B cell (primary cell): ENCODE measurements at regions of chr14 and their contacts with region 1.

Region 1: DNA sequence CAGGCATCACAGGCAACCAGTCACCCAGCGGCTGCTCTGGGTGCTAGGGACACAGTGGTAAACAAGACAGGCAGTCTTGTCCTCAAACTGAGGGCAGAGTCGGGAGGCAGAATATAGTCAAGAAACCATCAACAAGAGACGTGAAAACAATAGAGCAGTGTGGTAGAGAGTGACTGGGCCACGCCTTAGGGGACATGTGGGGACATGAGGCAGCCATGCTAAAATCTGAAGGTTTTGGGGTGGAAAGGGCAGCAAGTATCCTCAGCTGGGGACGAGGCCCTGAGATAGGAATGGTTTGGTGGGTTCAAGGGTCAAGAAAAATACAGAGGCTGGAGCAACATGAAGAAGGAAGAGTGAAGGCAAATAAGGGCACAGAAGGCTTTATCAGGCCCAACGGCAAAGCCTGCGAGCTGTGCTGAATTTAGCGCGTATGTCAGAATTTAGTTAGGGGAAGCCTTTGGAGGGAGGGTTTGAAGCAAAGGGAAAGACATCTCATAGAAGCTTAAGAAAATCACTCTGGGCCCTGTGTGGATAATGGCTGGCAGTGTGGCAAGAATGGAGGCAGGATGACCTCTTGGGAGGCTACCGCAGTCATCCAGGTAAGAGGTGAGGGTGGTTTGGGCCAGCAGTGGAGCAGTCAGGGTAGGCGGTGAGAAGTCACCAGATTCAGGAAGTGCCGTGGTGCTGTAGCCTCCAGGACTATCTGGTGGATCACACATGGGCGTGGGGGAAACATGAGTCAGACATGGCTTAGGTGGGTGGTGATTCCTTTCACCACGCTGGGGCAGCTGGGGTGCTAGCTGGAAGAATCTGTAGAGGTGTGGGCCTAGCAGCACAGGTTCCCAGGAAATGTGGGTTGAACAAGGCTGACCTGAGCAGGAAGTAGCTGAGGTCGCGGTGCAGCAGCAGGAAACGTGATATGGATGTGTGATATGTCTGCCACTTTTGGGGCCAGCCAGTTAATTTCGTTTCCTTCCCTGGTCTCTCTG is 3.0 kb downstream of the EVL start:
- DNase-seq: peak; percentile 80
- ATAC-seq: peak; percentile 41
- H3K4me3 ChIP-seq: peak overlapping the region; percentile 61 to 92 (median 69)
- H3K4me3 Mint-ChIP-seq: peak overlapping the region; percentile 100
- H3K27ac ChIP-seq: peak overlapping the region; percentile 79 to 87
- H3K27ac Mint-ChIP-seq: peak overlapping the region; percentile 98
- H3K4me1 ChIP-seq: peaks cover 77 to 86% of the 10 kb centered on the region in 2 donors
- H3K4me1 Mint-ChIP-seq: peaks cover 93% of the 10 kb centered on the region
- H3K27me3 ChIP-seq: no peaks in the 10 kb centered on the region
- H3K27me3 Mint-ChIP-seq: no peaks in the 10 kb centered on the region
- CTCF ChIP-seq: no peak

Region 2: GRCh38 chr14:99333841-99334635 is 734.2 kb before region 1 on chr14:
- CTCF ChIA-PET with region 1: no interaction called
- POLR2A ChIA-PET with region 1: no interaction called
- intact Hi-C with region 1: no loop called
- DNase-seq: no peak
- ATAC-seq: no peak
- H3K4me3 ChIP-seq: no peak overlapping the region
- H3K4me3 Mint-ChIP-seq: no peak overlapping the region
- H3K27ac ChIP-seq: no peak overlapping the region
- H3K27ac Mint-ChIP-seq: no peak overlapping the region
- H3K4me1 ChIP-seq: no peaks in the 10 kb centered on the region
- H3K4me1 Mint-ChIP-seq: no peaks in the 10 kb centered on the region
- H3K27me3 ChIP-seq: no peaks in the 10 kb centered on the region
- H3K27me3 Mint-ChIP-seq: peaks cover 6% of the 10 kb centered on the region
- CTCF ChIP-seq: no peak

Region 3: GRCh38 chr14:99982537-99983250 is 85.6 kb before region 1 on chr14:
- CTCF ChIA-PET with region 1: interaction called, 29 read pairs
- POLR2A ChIA-PET with region 1: no interaction called
- intact Hi-C with region 1: loop called (anchors 2 kb)
- DNase-seq: peak; percentile 74
- ATAC-seq: peak; percentile 99
- H3K4me3 ChIP-seq: no peak overlapping the region
- H3K4me3 Mint-ChIP-seq: no peak overlapping the region
- H3K27ac ChIP-seq: no peak overlapping the region
- H3K27ac Mint-ChIP-seq: no peak overlapping the region
- H3K4me1 ChIP-seq: no peaks in the 10 kb centered on the region
- H3K4me1 Mint-ChIP-seq: no peaks in the 10 kb centered on the region
- H3K27me3 ChIP-seq: no peaks in the 10 kb centered on the region
- H3K27me3 Mint-ChIP-seq: no peaks in the 10 kb centered on the region
- CTCF ChIP-seq: peak; percentile 96

Region 4: DNA sequence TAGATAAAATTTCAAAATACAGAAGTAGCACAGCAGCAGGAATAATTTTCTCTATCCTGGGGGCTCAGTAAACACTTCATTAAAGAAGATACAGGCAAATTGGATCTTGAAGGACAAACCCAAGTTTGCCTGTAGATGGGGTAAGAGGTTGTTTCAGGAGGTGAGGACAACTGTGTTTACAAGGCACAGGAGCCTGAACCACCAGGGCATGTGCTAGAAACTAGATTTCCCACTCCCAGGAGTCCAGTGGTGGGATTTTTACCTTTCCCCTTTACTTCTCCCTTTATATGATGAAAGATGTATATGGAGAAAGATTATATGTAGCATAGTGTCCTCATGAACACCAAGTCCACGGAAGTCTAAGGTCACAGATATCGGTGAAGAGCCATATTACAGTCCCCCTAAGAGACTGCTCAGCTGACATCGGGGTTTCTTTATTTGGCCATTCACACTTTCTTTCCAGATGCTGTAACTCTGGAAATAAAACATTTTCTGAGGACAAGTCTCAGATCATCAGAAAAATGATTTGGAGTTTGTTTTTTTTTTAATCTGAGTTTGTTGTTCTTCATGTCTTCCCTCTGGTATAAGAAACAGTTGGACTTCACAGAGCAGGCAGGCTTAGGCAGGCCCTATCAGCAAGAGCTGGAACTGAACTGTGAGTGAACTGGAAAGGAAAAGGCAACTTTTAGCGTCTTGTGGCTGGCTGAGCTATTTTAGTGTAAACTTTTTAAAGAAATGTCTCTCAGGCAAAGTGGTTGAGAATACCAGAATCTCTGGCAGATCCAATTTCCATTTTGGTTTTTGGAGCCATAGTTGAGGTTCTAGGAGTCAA is 11.1 kb before region 1 on chr14:
- CTCF ChIA-PET with region 1: interaction called, 86 read pairs
- POLR2A ChIA-PET with region 1: no interaction called
- intact Hi-C with region 1: loop called (anchors 1 kb)
- DNase-seq: peak; percentile 66
- ATAC-seq: peak; percentile 77
- H3K4me3 ChIP-seq: no peak overlapping the region
- H3K4me3 Mint-ChIP-seq: no peak overlapping the region
- H3K27ac ChIP-seq: no peak overlapping the region
- H3K27ac Mint-ChIP-seq: peak overlapping the region; percentile 57
- H3K4me1 ChIP-seq: peaks cover 16% of the 10 kb centered on the region in 2 donors
- H3K4me1 Mint-ChIP-seq: peaks cover 31% of the 10 kb centered on the region
- H3K27me3 ChIP-seq: no peaks in the 10 kb centered on the region
- H3K27me3 Mint-ChIP-seq: no peaks in the 10 kb centered on the region
- CTCF ChIP-seq: peak; percentile 69

Region 5: DNA sequence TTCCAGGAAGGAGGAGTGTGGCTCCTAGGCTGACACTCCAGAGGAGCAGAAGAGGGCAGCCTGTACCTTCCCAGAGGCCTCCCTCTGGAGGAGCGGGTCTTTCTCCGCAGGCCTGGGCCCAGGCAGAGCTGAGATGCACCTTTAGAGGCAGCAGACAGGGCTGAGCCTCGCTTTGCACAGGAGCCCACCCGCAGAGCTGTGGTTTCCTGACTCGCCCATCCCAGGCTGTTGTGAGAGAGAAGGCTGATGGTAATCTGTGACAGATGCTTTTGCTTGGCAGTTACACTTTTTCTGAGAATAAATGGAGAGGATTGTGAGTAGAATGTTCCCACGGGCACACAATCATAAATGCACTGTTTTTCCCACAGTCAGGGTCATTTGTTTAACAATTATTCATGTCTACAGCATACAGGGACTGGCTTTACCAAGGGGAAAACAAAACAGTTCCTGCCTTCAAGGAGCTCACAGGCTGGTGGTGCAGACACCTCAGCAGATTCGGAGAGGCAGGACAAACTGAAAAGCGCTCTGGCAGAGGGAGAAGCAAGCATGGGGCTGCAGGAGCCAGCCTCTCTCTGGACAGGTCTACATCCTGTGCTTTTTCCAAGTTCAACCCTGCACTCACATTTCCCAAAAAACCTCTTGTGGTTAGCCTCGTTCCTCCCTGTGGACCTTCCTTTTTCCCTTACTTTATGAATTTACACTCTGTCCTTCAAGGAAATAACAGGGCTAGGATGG is 10.9 kb after region 1 on chr14:
- CTCF ChIA-PET with region 1: interaction called, 77 read pairs
- POLR2A ChIA-PET with region 1: interaction called, 8 read pairs
- intact Hi-C with region 1: loop called (anchors 2 kb)
- DNase-seq: peak; percentile 27
- ATAC-seq: peak; percentile 44
- H3K4me3 ChIP-seq: no peak overlapping the region
- H3K4me3 Mint-ChIP-seq: peak overlapping the region; percentile 68
- H3K27ac ChIP-seq: peak overlapping the region in 1 of 2 donors; percentile 65
- H3K27ac Mint-ChIP-seq: peak overlapping the region; percentile 85
- H3K4me1 ChIP-seq: peaks cover 82 to 84% of the 10 kb centered on the region in 2 donors
- H3K4me1 Mint-ChIP-seq: peaks cover 85% of the 10 kb centered on the region
- H3K27me3 ChIP-seq: no peaks in the 10 kb centered on the region
- H3K27me3 Mint-ChIP-seq: no peaks in the 10 kb centered on the region
- CTCF ChIP-seq: no peak

Region 6: GRCh38 chr14:100155042-100155846 is 87.0 kb after region 1 on chr14:
- CTCF ChIA-PET with region 1: no interaction called
- POLR2A ChIA-PET with region 1: interaction called, 6 read pairs
- intact Hi-C with region 1: loop called (anchors 1 kb)
- DNase-seq: no peak
- ATAC-seq: no peak
- H3K4me3 ChIP-seq: no peak overlapping the region
- H3K4me3 Mint-ChIP-seq: no peak overlapping the region
- H3K27ac ChIP-seq: no peak overlapping the region
- H3K27ac Mint-ChIP-seq: peak overlapping the region; percentile 53
- H3K4me1 ChIP-seq: peaks cover 29 to 39% of the 10 kb centered on the region in 2 donors
- H3K4me1 Mint-ChIP-seq: peaks cover 33% of the 10 kb centered on the region
- H3K27me3 ChIP-seq: peaks cover 0 to 2% (median 0%) of the 10 kb centered on the region in 4 experiments
- H3K27me3 Mint-ChIP-seq: no peaks in the 10 kb centered on the region
- CTCF ChIP-seq: peak; percentile 65

Region 7: DNA sequence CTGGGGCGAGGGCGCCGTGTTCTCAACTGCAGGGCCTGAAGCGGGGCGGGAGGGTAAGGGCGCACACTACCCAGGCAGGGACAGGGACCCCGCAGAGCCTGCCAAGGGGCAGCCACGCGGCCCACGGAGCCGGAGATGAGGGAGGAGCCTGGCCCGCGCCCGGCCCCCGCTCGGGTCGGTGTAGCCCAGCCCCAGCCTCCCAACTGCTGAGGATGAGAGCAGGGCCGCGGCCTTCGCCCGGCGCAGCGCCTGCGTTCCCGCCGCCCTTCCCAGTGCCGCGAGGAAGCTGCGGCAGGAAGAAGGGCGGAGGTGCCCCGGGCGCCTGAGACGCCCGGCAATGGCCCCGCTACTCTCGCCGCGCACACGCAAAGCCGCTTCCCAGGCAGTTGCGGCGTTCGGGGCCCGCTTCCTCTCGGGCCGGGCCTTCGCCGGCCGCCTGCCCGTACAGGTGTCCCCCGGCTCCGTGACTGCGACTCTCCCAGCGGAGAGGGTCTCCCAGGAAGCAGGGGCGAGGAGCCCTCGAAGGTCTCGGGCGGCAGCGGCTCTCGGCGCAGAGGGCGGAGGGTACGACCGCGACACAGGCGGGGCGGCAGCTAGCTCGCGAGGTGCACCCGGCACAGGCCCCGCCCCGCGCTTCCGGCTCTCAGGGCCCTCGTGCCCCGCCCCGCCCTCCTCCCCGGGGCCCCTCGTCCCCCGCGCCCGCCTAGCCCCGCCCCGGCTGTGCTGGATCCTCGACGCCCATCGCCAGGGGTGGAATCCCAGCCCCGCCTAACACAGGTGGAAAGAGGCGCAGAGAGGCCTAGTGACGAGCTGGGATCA is 145.9 kb after region 1 on chr14:
- CTCF ChIA-PET with region 1: no interaction called
- POLR2A ChIA-PET with region 1: no interaction called
- intact Hi-C with region 1: loop called (anchors 2 kb)
- DNase-seq: peak; percentile 92
- ATAC-seq: peak; percentile 96
- H3K4me3 ChIP-seq: peak overlapping the region; percentile 17 to 91 (median 90)
- H3K4me3 Mint-ChIP-seq: peak overlapping the region; percentile 87
- H3K27ac ChIP-seq: peak overlapping the region; percentile 77 to 78
- H3K27ac Mint-ChIP-seq: peak overlapping the region; percentile 89
- H3K4me1 ChIP-seq: peaks cover 12 to 15% of the 10 kb centered on the region in 2 donors
- H3K4me1 Mint-ChIP-seq: peaks cover 16% of the 10 kb centered on the region
- H3K27me3 ChIP-seq: no peaks in the 10 kb centered on the region
- H3K27me3 Mint-ChIP-seq: no peaks in the 10 kb centered on the region
- CTCF ChIP-seq: no peak

Region 8: GRCh38 chr14:100239840-100240724 is 171.8 kb after region 1 on chr14:
- CTCF ChIA-PET with region 1: no interaction called
- POLR2A ChIA-PET with region 1: no interaction called
- intact Hi-C with region 1: loop called (anchors 1 kb)
- DNase-seq: peak; percentile 93
- ATAC-seq: peak; percentile 52
- H3K4me3 ChIP-seq: peak overlapping the region; percentile 72 to 91 (median 87)
- H3K4me3 Mint-ChIP-seq: peak overlapping the region; percentile 87
- H3K27ac ChIP-seq: peak overlapping the region; percentile 55 to 97
- H3K27ac Mint-ChIP-seq: peak overlapping the region; percentile 95
- H3K4me1 ChIP-seq: peaks cover 38 to 47% of the 10 kb centered on the region in 2 donors
- H3K4me1 Mint-ChIP-seq: peaks cover 55% of the 10 kb centered on the region
- H3K27me3 ChIP-seq: no peaks in the 10 kb centered on the region
- H3K27me3 Mint-ChIP-seq: no peaks in the 10 kb centered on the region
- CTCF ChIP-seq: peak; percentile 67

Region 9: GRCh38 chr14:100406505-100407131 is 338.4 kb after region 1 on chr14:
- CTCF ChIA-PET with region 1: no interaction called
- POLR2A ChIA-PET with region 1: no interaction called
- intact Hi-C with region 1: no loop called
- DNase-seq: no peak
- ATAC-seq: no peak
- H3K4me3 ChIP-seq: no peak overlapping the region
- H3K4me3 Mint-ChIP-seq: no peak overlapping the region
- H3K27ac ChIP-seq: no peak overlapping the region
- H3K27ac Mint-ChIP-seq: no peak overlapping the region
- H3K4me1 ChIP-seq: peaks cover 8 to 12% of the 10 kb centered on the region in 2 donors
- H3K4me1 Mint-ChIP-seq: peaks cover 12% of the 10 kb centered on the region
- H3K27me3 ChIP-seq: no peaks in the 10 kb centered on the region
- H3K27me3 Mint-ChIP-seq: no peaks in the 10 kb centered on the region
- CTCF ChIP-seq: no peak